ENCODE measurements at regions of chr13 and their contacts with region 1.

Region 1: DNA sequence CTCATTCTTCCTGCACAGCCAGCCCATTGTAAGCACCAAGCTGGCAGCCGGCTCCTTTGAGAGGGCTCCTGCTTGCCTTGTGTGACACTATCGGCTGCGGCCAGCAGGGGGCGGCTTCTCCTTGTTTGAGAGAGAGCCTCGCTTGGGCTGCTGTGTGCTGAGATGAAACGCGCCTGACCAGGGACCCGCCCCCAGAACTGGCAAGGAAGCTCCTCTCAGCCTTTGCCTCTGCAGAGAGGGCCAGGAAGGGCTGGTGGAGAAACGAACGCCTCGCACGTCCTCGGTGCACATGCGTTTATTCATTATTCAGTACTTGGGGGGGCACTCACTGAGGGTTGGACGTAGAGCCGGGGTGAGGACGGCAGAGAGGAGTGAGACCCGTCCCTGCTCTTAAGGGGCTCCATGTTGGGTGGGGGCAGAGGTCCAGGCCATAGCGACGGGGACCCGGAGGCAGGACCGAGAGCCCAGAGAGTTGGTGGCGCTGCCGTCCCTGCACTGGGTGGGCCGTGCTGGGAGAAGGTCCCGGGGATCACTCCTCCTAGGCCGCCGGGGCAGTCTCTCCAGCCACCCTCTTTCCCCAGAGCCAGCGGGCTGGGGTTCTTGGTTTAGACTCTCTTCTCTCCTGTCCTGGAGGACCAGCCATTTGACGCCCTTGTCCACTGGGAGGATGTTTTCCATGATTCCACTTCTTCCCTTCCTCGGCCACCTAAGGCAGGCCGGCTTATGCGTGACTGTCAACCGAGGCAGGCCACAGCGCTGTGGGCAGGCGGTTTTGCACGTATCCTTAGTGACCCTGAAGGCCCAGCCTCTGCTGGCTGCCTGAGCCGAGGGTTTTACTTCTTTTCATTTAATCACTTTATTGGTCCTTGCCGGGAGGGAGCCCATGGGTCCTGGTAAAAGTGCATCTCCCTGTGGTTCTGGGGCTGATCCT is 174.5 kb downstream of the KATNAL1 start:
- DNase-seq: peak; percentile 99
- ATAC-seq: peak; percentile 98
- H3K4me3 Mint-ChIP-seq: no peak overlapping the region
- H3K27ac Mint-ChIP-seq: no peak overlapping the region; the same call in 1 of the 2 replicates
- H3K4me1 Mint-ChIP-seq: peaks cover 6% of the 10 kb centered on the region; the same call in 1 of the 2 replicates
- H3K27me3 Mint-ChIP-seq: peaks cover 4% of the 10 kb centered on the region
- CTCF ChIP-seq: peak; percentile 96

Region 2: GRCh38 chr13:29743201-29743786 is 389.6 kb before region 1 on chr13:
- CTCF ChIA-PET with region 1: no interaction called
- POLR2A ChIA-PET with region 1: no interaction called
- DNase-seq: no peak
- ATAC-seq: no peak
- H3K4me3 Mint-ChIP-seq: no peak overlapping the region
- H3K27ac Mint-ChIP-seq: no peak overlapping the region
- H3K4me1 Mint-ChIP-seq: no peaks in the 10 kb centered on the region
- H3K27me3 Mint-ChIP-seq: no peaks in the 10 kb centered on the region
- CTCF ChIP-seq: no peak

Region 3: DNA sequence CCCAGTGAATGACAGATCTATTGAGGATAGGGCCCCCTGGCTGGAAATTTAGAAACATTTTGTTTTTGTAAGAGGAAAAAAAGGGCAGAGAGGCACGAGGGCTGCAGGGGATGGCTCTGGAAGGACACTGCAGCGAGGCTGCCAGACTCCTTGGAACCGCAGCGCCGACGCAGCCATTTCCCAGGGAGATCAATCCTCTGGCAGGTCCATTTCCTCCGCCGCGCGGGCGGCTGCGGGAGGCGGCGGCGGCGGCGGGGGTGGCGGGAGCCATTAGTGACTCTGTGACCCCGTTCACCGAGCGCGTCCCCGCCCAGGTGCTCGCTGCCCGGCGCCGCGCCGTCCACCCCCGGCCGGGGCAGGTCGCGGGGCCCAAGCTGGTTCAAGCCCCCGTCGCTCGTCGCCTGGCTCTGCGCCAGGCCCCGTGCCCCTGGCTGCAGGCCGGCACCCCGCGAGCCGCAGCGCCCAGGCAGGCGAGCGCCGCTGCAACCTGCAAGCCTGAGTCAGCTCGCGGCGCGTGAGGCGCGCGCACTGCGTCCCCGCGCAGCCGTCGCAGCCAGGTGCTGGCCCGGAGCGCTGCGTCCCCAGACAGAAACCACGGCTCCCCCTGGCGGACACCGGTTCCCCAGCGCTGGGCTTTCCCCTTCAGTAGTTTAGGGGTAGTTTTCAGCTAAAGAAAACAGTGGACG is 18.2 kb before region 1 on chr13:
- CTCF ChIA-PET with region 1: interaction called, 69 read pairs
- POLR2A ChIA-PET with region 1: no interaction called
- DNase-seq: peak; percentile 96
- ATAC-seq: peak; percentile 82
- H3K4me3 Mint-ChIP-seq: peak overlapping the region; percentile 75
- H3K27ac Mint-ChIP-seq: peak overlapping the region; percentile 76; the same call in 1 of the 2 replicates
- H3K4me1 Mint-ChIP-seq: peaks cover 37% of the 10 kb centered on the region
- H3K27me3 Mint-ChIP-seq: peaks cover 19% of the 10 kb centered on the region
- CTCF ChIP-seq: peak; percentile 67

Region 4: GRCh38 chr13:30158774-30159445 is 26.0 kb after region 1 on chr13:
- CTCF ChIA-PET with region 1: interaction called, 20 read pairs
- POLR2A ChIA-PET with region 1: no interaction called
- DNase-seq: no peak
- ATAC-seq: peak; percentile 37
- H3K4me3 Mint-ChIP-seq: no peak overlapping the region
- H3K27ac Mint-ChIP-seq: no peak overlapping the region
- H3K4me1 Mint-ChIP-seq: peaks cover 21% of the 10 kb centered on the region
- H3K27me3 Mint-ChIP-seq: peaks cover 3% of the 10 kb centered on the region
- CTCF ChIP-seq: no peak

Region 5: DNA sequence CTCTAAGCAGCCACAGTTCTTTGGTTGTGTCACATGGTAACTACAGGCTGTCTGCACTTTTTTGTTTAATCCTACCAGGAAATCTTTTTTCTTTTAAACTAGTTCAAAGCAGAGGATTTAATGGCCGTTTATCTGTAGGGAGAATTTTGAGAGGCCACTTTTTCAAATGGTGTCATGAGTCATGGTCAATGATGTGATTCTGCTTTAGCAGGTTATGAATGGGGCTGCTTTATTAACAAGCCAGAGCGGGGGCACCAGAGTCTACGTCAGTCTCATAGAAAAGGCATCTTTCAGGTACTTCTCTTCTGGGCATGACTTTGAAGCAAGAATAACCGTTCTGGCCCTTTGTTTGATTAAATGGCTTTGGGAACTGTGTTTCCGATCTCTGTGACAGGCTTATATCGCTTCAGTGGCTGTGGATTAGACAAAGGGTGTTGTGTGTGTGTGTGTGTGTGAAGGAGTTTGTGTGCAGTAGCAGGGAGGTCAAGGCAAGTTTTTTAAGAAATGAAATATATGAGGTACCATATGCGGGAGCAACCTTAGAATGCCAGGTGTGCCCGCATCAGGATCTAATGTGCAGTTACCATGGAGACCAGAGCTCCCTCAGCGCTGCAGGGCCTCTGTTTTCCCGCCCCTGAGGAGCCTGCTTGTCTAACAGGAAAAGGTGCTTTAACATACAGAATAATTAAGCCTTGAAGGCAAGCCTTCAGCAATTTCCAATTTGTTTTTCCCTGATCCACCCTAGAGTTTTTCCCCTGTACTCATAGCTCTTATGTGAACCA is 53.9 kb after region 1 on chr13:
- CTCF ChIA-PET with region 1: interaction called, 12 read pairs
- POLR2A ChIA-PET with region 1: no interaction called
- DNase-seq: peak; percentile 20
- ATAC-seq: peak; percentile 66
- H3K4me3 Mint-ChIP-seq: no peak overlapping the region
- H3K27ac Mint-ChIP-seq: no peak overlapping the region
- H3K4me1 Mint-ChIP-seq: peaks cover 21% of the 10 kb centered on the region
- H3K27me3 Mint-ChIP-seq: no peaks in the 10 kb centered on the region
- CTCF ChIP-seq: no peak

Region 6: GRCh38 chr13:30306762-30307193 is 173.9 kb after region 1 on chr13:
- CTCF ChIA-PET with region 1: interaction called, 26 read pairs
- POLR2A ChIA-PET with region 1: no interaction called
- DNase-seq: peak; percentile 93
- ATAC-seq: peak; percentile 93
- H3K4me3 Mint-ChIP-seq: peak overlapping the region; percentile 80
- H3K27ac Mint-ChIP-seq: peak overlapping the region; percentile 81
- H3K4me1 Mint-ChIP-seq: peaks cover 36% of the 10 kb centered on the region
- H3K27me3 Mint-ChIP-seq: no peaks in the 10 kb centered on the region
- CTCF ChIP-seq: no peak

Region 7: DNA sequence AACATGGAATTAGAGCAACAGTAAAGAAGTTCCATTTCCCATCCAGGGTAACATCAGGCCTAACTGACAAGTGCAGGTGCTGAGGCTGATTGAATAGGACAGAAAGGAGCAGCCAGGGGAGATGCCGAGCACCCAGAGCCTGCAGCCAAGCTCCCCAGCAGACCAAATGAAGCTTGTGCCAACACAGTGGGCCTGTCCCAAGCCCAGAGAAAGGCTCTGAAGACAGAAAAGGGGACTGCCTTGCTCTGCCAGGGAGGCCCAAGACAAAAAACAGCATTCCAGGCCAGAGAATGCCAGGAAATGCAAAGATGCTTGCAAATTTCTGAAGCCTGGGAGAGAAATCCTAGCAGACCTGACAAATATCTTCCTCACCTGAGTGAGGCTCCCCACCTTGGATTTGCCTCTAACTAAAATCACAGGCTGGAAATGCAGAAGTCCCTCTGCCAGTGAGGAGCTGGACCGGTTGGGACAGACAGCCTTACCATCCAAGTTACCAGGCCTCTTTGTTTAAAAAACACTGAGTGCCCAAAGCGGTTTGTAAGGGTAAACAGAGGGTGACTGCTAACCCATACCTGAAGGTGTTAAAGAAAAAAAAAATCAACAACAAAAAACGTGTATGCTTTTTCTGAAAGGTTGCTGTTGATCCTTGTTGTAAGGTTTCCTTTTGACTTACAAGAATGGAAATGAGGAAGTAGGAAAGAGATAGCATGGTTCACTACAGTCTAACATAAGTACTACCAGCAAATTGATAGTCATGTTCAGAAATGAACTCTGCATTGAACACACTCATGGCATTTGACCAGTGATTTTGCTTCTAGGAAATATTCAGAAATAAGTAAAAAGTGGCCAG is 344.7 kb after region 1 on chr13:
- CTCF ChIA-PET with region 1: interaction called, 10 read pairs
- POLR2A ChIA-PET with region 1: no interaction called
- DNase-seq: peak; percentile 29
- ATAC-seq: peak; percentile 86
- H3K4me3 Mint-ChIP-seq: peak overlapping the region; percentile 19; the same call in 1 of the 2 replicates
- H3K27ac Mint-ChIP-seq: peak overlapping the region; percentile 88
- H3K4me1 Mint-ChIP-seq: peaks cover 39% of the 10 kb centered on the region
- H3K27me3 Mint-ChIP-seq: no peaks in the 10 kb centered on the region
- CTCF ChIP-seq: no peak